Endothelial cell of umbilical vein (primary cell): ENCODE measurements at regions of chr2 and their contacts with region 1.

Region 1: DNA sequence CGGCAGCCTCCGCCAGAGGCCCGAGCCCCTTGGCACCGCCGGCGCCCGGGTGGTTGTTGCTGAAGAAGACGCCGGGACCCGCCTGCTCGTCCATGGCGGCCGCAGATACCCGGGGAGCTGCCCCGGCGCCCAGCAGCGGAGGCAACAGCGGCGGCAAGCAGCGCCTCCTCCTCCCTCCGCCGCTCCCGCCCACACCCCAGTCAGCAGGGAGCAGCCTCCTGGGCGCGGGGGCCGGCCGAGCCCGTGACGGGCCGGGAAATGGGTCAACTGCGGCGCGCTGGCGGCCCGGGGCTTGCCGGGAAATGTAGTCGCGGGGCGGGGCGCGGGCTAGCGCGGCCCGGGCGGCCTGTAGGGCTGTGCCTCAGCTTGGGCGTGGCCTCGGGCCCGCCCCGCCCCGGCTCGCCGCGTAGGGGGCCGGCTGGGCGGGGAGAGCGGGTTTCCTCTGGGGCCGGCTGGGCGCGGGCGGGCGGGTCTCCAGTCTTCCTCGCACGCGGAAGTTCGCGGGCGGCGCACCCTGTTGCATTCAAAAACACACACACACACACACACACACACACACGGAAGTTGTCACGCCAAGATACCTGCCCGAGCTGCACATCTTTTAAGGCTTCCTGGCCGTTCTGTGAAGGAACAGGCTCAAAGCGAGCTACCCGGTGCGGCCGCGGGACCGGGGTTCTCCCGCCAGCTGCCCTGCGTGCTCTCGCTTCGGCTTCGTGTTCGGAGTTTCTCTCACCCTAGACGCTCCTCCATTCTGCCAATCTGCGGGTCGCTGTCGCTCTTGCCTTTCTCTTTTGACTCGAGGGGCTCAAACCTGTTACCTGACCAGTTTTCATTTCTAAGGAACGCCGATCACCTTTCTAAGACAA is at the start of gene STRN:
- DNase-seq: peak; percentile 97
- H3K4me3 ChIP-seq: peak within 1 kb of the TSS; percentile 66 to 85 (median 85)
- H3K27ac ChIP-seq: peak within 1 kb of the TSS; percentile 53
- H3K4me1 ChIP-seq: peaks cover 19% of the 10 kb centered on the region
- H3K27me3 ChIP-seq: no peaks in the 10 kb centered on the region
- CTCF ChIP-seq: no peak
- POLR2A ChIP-seq: peak; percentile 74
- total RNA-seq, gene STRN: 32.6 and 33.4 TPM in 2 replicates

Region 2: DNA sequence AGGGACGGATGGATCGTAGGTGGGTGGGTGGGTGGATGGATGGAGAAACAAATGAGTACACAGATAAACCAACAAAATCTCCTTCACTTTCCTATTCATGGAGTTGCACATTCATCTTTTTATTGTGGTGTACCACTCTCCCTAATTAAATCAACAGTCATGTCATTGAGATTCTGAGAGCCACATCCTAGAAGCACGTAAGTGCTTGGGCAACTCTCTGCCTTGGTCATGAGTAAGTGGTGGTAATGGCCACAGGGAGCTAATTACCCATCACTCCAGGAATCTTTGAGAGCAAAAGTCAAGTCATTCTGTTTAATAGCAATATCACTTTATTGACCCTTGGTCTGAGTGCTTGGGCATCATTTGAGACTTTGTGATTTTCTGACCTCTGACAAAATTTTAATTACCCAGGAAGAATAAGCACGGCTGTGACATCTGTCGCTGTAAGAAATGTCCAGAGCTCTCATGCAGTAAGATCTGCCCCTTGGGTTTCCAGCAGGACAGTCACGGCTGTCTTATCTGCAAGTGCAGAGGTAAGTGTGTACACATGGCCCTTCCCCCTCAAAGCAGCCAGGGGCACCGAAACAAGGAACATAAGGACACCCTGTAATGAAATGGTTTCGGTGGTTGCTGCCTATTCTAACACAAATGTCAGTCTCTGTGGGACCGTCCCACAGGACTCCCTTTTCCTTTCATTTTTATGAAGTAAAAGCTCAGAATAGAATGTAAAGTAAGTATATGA is 454.6 kb before region 1 on chr2:
- CTCF ChIA-PET with region 1: no interaction called
- POLR2A ChIA-PET with region 1: no interaction called
- dilution Hi-C with region 1: no loop called
- intact Hi-C with region 1: no loop called
- DNase-seq: no peak
- H3K4me3 ChIP-seq: no peak overlapping the region
- H3K27ac ChIP-seq: no peak overlapping the region
- H3K4me1 ChIP-seq: no peaks in the 10 kb centered on the region
- H3K27me3 ChIP-seq: no peaks in the 10 kb centered on the region
- CTCF ChIP-seq: no peak
- POLR2A ChIP-seq: no peak

Region 3: GRCh38 chr2:36589230-36589630 is 377.4 kb before region 1 on chr2:
- CTCF ChIA-PET with region 1: no interaction called
- POLR2A ChIA-PET with region 1: no interaction called
- dilution Hi-C with region 1: no loop called
- intact Hi-C with region 1: no loop called
- DNase-seq: no peak
- H3K4me3 ChIP-seq: no peak overlapping the region
- H3K27ac ChIP-seq: no peak overlapping the region
- H3K4me1 ChIP-seq: no peaks in the 10 kb centered on the region
- H3K27me3 ChIP-seq: no peaks in the 10 kb centered on the region
- CTCF ChIP-seq: no peak
- POLR2A ChIP-seq: no peak

Region 4: GRCh38 chr2:36889795-36890194 is 76.8 kb before region 1 on chr2:
- CTCF ChIA-PET with region 1: interaction called, 3 read pairs
- POLR2A ChIA-PET with region 1: no interaction called
- dilution Hi-C with region 1: no loop called
- intact Hi-C with region 1: loop called (anchors 5 kb)
- DNase-seq: peak; percentile 95
- H3K4me3 ChIP-seq: no peak overlapping the region
- H3K27ac ChIP-seq: peak overlapping the region; percentile 61
- H3K4me1 ChIP-seq: peaks cover 5% of the 10 kb centered on the region
- H3K27me3 ChIP-seq: no peaks in the 10 kb centered on the region
- CTCF ChIP-seq: no peak
- POLR2A ChIP-seq: no peak

Region 5: GRCh38 chr2:37083873-37084794 is 117.5 kb after region 1 on chr2 and contains the starts of genes GPATCH11 and HEATR5B:
- CTCF ChIA-PET with region 1: no interaction called
- POLR2A ChIA-PET with region 1: no interaction called
- dilution Hi-C with region 1: no loop called
- intact Hi-C with region 1: loop called (anchors 5 kb)
- DNase-seq: peak; percentile 99
- H3K4me3 ChIP-seq: peak within 1 kb of the TSS; percentile 54 to 99 (median 82)
- H3K27ac ChIP-seq: peak within 1 kb of the TSS; percentile 42
- H3K4me1 ChIP-seq: peaks cover 32% of the 10 kb centered on the region
- H3K27me3 ChIP-seq: no peaks in the 10 kb centered on the region
- CTCF ChIP-seq: no peak
- POLR2A ChIP-seq: peak; percentile 73
- total RNA-seq, gene GPATCH11: 10.2 and 12.1 TPM in 2 replicates
- total RNA-seq, gene HEATR5B: 19.4 and 22.5 TPM in 2 replicates